ENCODE measurements at regions of chr5 and their contacts with region 1.

Region 1: DNA sequence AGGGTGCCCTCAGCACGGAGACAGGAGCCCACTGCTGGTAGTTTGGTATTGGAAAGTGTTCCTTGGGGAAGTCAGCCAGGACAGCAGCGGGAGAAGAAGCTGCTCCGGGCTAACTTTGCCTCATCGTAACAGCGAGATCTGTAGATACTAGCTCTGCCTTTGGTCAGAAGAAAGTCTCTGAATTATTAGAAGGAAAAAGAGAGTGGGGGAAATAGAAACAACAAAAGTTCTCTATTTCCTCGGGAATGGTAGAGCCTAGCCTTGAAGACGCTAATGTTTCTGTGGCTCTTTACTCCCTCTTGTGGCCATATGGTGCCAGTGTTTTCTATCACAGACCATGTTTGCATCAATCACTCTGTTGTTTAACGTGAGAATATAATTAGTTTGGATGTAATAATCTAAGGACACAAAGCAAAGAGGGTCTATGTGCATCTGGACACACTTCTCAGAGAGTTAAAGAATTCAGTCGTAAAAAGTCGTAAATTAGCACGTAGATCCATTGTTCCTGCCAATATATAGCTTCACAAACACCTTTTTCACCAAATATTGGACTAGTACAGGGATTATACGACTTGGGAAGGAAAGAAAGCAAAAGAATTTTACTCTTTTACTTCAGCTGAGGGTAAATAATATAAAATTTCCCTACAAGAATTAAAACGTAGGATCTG is 40.2 kb upstream of the HSD17B4 start:
- DNase-seq: peak; percentile 64
- ATAC-seq: peak; percentile 95

Region 2: DNA sequence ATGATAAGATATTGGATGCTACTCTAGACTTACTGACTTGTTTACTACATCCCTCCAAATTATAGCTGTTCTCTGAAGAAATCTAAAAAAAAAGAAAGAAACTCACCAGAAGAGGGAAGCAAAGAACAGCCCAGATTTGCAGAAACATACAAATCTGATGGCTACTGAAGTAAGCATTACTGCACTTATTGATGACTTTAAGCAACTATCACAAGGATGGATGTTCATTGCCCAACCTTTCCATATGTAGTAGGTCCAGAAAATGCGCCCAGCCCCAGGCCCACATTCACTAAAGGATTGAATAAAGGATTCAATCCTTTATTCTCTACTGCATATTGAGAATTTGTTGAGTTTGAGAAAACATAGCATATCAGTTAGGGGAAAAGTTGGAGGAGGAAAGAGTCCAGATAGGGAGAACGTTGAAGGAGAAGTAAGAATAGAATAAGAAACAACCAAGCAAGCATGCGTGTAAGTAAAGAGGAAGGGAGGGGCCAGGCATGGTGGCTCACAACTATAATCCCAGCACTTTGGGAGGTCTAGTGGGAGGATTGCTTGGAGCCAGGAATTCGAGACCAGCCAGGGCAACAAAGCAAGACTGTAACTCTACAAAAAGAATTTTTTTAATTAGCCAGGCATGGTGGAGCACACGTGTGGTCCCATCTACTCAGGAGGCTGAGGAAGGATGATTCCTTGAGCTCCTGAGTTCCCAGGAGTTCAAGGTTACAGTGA is 389.9 kb before region 1 on chr5:
- intact Hi-C with region 1: loop called (anchors 5 kb)
- DNase-seq: no peak
- ATAC-seq: peak; percentile 44

Region 3: DNA sequence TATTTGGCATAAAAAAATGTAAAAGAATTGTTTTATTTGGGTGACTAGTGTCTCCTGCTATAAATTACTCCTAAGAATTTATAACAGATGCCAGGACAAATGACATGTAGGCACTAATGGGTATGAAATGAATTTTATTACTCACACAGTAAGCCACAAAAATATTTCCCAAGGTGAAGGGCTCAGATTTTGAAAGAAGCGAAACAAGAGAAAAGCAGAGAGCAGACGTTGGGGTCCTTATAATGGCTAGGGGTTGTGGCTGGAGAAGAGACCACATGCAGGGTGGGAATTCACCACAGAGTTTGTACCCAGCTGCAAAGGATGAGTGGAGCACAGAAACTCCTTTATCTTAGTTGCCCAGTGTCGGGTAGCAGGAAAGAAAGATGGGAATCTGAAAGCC is 1007.1 kb after region 1 on chr5:
- intact Hi-C with region 1: no loop called
- DNase-seq: no peak
- ATAC-seq: no peak

Region 4: DNA sequence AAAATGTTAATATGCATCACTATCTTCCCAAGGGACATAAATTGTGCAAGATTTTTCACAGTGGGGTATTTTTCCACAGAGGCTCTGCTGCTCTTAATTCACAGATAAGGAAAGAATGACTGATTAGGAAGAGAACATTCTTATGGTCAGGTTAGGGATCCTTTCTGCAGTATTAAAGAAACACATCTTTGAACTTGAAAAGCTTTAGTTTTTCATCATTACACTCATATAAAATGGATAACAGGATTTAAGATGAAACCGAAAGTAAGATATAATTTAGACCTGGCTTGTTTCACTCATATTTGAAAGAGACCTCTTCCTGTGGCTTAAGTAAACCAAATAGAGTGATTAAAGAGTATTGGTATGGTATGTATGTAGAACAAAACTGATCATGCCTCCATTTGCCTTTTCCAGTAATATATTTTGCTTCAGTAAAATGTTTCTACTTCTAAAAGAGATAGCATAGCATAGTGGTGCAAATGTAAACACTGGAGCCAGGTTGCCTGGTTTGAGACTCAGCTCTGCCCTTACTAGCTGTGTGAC is 1212.0 kb after region 1 on chr5:
- intact Hi-C with region 1: no loop called
- DNase-seq: no peak
- ATAC-seq: no peak

Measured in sciatic nerve (tissue), 2 donors.